Right ventricle myocardium inferior (tissue), 1 donor: ENCODE measurements at regions of chr5 and their contacts with region 1.

Region 1: DNA sequence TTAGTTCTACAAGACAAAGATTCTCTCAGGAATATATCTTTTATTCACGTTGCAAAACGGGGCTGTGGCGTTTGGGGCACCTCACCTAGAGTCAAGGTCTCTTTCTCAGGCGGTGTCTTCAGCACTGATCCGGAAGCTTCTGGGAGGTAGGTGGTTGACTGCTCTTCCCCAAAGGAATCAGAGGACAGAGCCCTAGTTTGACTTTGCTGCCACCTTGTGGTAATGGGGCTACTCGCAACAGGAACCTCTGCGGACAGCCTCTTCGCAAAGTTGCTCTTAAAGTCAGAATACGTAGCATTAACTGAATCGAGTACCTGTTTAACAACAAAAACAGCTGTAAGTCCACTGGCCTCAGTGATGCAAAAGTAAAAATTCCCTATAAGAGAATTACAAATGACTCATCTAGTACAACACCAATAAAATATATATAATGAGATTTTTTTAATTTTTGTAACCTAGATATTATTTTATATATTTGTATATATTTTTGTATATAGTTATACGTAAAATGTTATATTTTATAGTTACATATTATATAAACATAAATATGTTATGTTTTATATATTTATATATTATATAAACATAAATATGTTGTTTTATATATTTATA is 13.3 kb upstream of the GPX8 start:
- DNase-seq: no peak
- ATAC-seq: peak; percentile 74

Region 2: GRCh38 chr5:54905943-54906537 is 240.6 kb before region 1 on chr5:
- intact Hi-C with region 1: loop called (anchors 5 kb)
- DNase-seq: no peak
- ATAC-seq: no peak

Region 3: GRCh38 chr5:54944364-54944763 is 202.3 kb before region 1 on chr5:
- intact Hi-C with region 1: loop called (anchors 1 kb)
- DNase-seq: no peak
- ATAC-seq: no peak

Region 4: GRCh38 chr5:55073211-55073610 is 73.4 kb before region 1 on chr5:
- intact Hi-C with region 1: no loop called
- DNase-seq: no peak
- ATAC-seq: no peak